Activated T-helper 1 cell treated with anti-CD3 and anti-CD28 coated beads, Interleukin-12 subunit alpha, Interleukin-12 subunit beta, Interleukin-2, Interleukin-4 antibody, amounts not matched to agents 30 ng/mL and 10 ng/mL and 1 ng/mL, durations not matched to agents 14 hours and 24 hours and 36 hours (primary cell): ENCODE measurements at regions of chr1 and their contacts with region 1.

Region 1: DNA sequence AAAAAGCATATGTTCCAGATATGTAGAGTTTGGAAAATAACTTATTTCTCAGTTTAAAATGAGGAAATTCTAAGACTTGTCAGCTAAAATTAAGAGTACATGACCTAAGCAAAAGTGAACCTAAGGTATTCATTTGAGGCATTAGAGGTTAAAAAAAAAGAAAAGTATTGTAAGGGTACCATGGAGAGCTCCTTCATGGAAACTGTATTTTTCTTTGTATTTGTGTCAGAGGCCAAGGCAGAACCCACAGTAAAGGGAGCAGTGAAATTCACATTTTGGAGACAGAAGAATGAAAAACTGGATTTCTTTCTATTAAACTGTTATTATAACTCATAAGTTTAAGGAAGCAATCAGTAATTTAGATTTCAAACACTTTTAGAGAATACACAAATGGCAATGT is 1494.8 kb downstream of the KCNT2 start:
- DNase-seq: no peak
- H3K4me3 Mint-ChIP-seq: no peak overlapping the region
- H3K27ac Mint-ChIP-seq: no peak overlapping the region
- H3K4me1 Mint-ChIP-seq: no peaks in the 10 kb centered on the region
- H3K27me3 Mint-ChIP-seq: no peaks in the 10 kb centered on the region

Region 2: GRCh38 chr1:195130598-195130997 is 17.1 kb after region 1 on chr1:
- intact Hi-C with region 1: loop called (anchors 1 kb)
- DNase-seq: no peak
- H3K4me3 Mint-ChIP-seq: no peak overlapping the region
- H3K27ac Mint-ChIP-seq: no peak overlapping the region
- H3K4me1 Mint-ChIP-seq: no peaks in the 10 kb centered on the region
- H3K27me3 Mint-ChIP-seq: no peaks in the 10 kb centered on the region

Region 3: GRCh38 chr1:195568389-195568788 is 454.9 kb after region 1 on chr1:
- intact Hi-C with region 1: no loop called
- DNase-seq: no peak
- H3K4me3 Mint-ChIP-seq: no peak overlapping the region
- H3K27ac Mint-ChIP-seq: no peak overlapping the region
- H3K4me1 Mint-ChIP-seq: no peaks in the 10 kb centered on the region
- H3K27me3 Mint-ChIP-seq: no peaks in the 10 kb centered on the region